Activated naive CD4-positive, alpha-beta T cell treated with anti-CD3 and anti-CD28 coated beads, Interleukin-2, amount 10 ng/mL, durations not matched to agents 7 days and 5 days (primary cell): ENCODE measurements at regions of chr12 and their contacts with region 1.

Region 1: GRCh38 chr12:104303538-104304151 is at the start of gene EID3:
- DNase-seq: peak; percentile 93
- H3K4me3 Mint-ChIP-seq: peak within 1 kb of the TSS; percentile 84
- H3K27ac Mint-ChIP-seq: peak within 1 kb of the TSS; percentile 96
- H3K4me1 Mint-ChIP-seq: peaks cover 62% of the 10 kb centered on the region
- H3K27me3 Mint-ChIP-seq: no peaks in the 10 kb centered on the region

Region 2: GRCh38 chr12:104288635-104289274 is 14.9 kb before region 1 on chr12:
- CTCF ChIA-PET with region 1: interaction called, 10 read pairs
- DNase-seq: peak; percentile 90
- H3K4me3 Mint-ChIP-seq: peak overlapping the region; percentile 90
- H3K27ac Mint-ChIP-seq: peak overlapping the region; percentile 98
- H3K4me1 Mint-ChIP-seq: peaks cover 44% of the 10 kb centered on the region
- H3K27me3 Mint-ChIP-seq: no peaks in the 10 kb centered on the region